Activated CD4-positive, alpha-beta memory T cell treated with anti-CD3 and anti-CD28 coated beads, Interleukin-2, amount 10 ng/mL, durations not matched to agents 7 days and 5 days (primary cell): ENCODE measurements at regions of chr15 and their contacts with region 1.

Region 1: DNA sequence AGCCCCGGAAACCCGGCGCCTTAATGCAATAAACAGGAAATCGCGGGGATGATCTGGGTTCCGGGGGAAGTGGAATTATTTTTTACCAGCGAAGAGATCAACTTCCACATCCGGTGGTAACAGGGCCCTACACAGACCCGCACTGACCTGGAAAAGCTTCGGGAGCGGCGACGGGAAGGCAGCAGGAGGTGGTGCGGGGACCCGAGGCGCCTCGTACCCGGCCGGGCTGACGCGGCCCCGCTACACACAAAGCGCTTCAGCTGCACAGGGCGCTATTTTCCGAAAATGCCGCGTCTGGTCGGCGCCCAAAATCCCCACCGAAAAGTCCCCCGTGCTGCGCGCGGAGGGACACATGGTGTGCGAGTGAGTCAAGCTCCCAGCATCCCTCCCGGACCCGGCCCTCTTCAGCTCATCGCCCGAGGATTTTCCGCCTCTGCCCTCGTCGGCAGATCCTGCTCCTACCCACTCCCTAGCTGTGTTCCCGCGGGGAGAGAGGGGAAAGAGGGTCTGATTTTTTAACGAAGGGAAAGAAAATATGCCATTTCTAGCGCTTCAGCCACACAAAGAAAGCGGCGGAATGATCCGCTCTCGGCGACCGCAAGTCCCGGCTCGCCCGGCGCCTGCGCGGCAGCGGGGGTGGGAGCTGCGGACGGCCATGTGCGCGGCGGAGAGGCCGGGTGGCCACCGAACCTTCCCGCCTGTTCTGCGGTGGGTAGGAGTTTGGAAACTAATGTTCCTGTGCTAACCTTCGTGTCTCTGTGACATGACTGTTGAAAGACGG is at the start of gene GABPB1:
- DNase-seq: peak; percentile 90
- H3K4me3 Mint-ChIP-seq: peak within 1 kb of the TSS; percentile 88
- H3K27ac Mint-ChIP-seq: peak within 1 kb of the TSS; percentile 100
- H3K4me1 Mint-ChIP-seq: peaks cover 42% of the 10 kb centered on the region
- H3K27me3 Mint-ChIP-seq: no peaks in the 10 kb centered on the region
- total RNA-seq, gene GABPB1: 37.5 to 38.1 TPM

Region 2: GRCh38 chr15:48877630-48878595 is 1477.1 kb before region 1 on chr15 and contains the start of gene EID1:
- CTCF ChIA-PET with region 1: interaction called, 3 read pairs
- POLR2A ChIA-PET with region 1: interaction called, 13 read pairs
- DNase-seq: peak; percentile 96
- H3K4me3 Mint-ChIP-seq: peak within 1 kb of the TSS; percentile 99
- H3K27ac Mint-ChIP-seq: peak within 1 kb of the TSS; percentile 97
- H3K4me1 Mint-ChIP-seq: peaks cover 49% of the 10 kb centered on the region
- H3K27me3 Mint-ChIP-seq: no peaks in the 10 kb centered on the region
- total RNA-seq, gene EID1: 99.7 to 102 TPM

Region 3: DNA sequence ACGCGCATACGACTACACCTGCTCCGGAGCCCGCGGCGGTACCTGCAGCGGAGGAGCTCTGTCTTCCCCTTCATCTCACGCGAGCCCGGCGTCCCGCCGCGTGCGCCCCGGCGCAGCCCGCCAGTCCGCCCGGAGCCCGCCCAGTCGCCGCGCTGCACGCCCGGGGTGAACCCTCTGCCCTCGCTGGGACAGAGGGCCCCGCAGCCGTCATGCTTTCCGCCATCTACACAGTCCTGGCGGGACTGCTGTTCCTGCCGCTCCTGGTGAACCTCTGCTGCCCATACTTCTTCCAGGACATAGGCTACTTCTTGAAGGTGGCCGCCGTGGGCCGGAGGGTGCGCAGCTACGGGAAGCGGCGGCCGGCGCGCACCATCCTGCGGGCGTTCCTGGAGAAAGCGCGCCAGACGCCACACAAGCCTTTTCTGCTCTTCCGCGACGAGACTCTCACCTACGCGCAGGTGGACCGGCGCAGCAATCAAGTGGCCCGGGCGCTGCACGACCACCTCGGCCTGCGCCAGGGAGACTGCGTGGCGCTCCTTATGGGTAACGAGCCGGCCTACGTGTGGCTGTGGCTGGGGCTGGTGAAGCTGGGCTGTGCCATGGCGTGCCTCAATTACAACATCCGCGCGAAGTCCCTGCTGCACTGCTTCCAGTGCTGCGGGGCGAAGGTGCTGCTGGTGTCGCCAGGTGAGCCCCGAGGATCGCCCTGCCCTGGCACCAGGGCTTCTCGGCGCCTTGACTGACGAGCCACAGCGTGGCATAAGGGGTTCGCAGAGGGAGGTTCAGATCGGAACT is 172.6 kb before region 1 on chr15:
- CTCF ChIA-PET with region 1: interaction called, 8 read pairs
- POLR2A ChIA-PET with region 1: interaction called, 85 read pairs
- DNase-seq: peak; percentile 65
- H3K4me3 Mint-ChIP-seq: peak overlapping the region; percentile 96
- H3K27ac Mint-ChIP-seq: peak overlapping the region; percentile 85
- H3K4me1 Mint-ChIP-seq: peaks cover 53% of the 10 kb centered on the region
- H3K27me3 Mint-ChIP-seq: no peaks in the 10 kb centered on the region

Region 4: DNA sequence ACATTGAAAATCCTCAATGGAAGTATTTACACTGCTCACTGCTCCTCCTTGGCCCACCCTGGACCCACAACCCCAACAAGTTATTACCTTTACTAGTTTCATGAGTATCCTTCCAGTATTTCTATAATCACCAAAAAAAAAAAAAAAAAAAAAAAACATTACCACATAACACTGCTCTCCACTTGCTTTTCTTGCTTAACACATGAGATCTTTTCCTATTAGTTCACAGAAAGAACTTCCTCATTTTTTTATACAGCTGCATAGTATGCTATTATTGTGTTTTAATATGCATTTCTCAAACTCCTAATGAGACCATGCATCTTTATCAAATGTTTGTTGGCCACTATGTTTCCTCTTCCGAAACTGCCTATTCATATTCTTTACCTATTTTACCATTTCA is 14.6 kb before region 1 on chr15:
- CTCF ChIA-PET with region 1: interaction called, 3 read pairs
- POLR2A ChIA-PET with region 1: interaction called, 24 read pairs
- DNase-seq: no peak
- H3K4me3 Mint-ChIP-seq: no peak overlapping the region
- H3K27ac Mint-ChIP-seq: no peak overlapping the region
- H3K4me1 Mint-ChIP-seq: peaks cover 14% of the 10 kb centered on the region
- H3K27me3 Mint-ChIP-seq: no peaks in the 10 kb centered on the region

Region 5: DNA sequence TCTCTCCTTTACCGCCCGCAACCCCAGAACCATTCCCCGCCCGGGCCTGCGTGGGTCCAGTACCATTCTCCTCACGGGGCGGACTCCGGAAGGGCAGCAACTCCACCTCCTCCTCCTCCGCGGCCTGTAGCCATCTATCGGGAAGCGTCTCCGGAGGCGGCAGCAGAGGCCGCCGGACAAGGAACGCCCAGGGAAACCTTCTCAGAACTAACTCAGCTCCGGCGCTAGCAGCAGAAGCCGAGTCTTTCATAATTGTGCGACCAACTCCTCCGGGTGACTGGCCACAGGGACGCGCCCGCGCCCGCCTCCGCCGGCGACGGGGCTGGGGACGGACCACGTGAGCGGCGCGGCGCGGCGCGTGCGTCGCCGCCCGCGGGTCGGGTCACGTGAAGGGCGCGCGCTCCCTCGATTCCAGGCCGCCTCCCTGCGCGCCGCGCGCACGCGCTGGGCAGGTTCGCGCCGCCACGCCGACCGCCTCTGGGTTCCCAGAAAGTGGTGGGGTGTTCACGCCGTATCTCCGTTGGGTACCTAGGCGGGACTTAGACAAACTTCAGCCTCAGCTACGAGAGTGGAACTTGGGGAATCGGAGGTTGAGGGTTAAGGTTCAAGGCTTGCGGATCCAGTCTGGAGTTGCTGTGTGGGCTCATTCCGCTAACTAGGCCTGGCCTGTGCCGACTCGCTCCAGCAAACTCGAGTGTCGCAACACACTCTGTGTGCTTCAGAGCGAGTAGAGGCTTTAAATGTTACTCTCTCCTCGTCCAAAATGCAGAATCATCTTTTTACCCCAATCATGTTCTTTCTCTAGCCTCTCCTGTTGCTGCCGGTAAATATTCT is 331.7 kb after region 1 on chr15 and contains the start of gene TRPM7:
- CTCF ChIA-PET with region 1: no interaction called
- POLR2A ChIA-PET with region 1: interaction called, 11 read pairs
- DNase-seq: peak; percentile 90
- H3K4me3 Mint-ChIP-seq: peak within 1 kb of the TSS; percentile 99
- H3K27ac Mint-ChIP-seq: peak within 1 kb of the TSS; percentile 97
- H3K4me1 Mint-ChIP-seq: peaks cover 57% of the 10 kb centered on the region
- H3K27me3 Mint-ChIP-seq: no peaks in the 10 kb centered on the region
- total RNA-seq, gene TRPM7: 35.3 to 40.2 TPM

Region 6: DNA sequence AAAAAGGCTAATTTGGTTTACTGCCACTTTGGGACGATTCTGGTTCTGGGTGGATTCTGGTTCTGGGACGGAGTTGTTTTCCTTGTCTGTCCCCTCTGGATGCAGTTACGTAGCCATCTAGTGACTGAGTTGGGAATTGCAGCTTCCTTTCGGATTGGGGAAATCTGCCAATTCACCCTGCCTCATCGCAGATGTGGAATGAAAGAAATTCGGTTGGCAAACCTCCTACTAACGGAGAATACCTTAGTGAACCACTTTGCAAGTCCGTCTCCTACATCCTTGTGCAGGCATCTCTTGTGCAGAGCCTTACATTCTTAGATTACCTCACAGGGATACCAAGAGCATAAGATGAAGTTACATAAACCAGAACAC is 521.9 kb after region 1 on chr15:
- CTCF ChIA-PET with region 1: interaction called, 3 read pairs
- POLR2A ChIA-PET with region 1: interaction called, 26 read pairs
- DNase-seq: peak; percentile 71
- H3K4me3 Mint-ChIP-seq: peak overlapping the region; percentile 58
- H3K27ac Mint-ChIP-seq: peak overlapping the region; percentile 52
- H3K4me1 Mint-ChIP-seq: peaks cover 50% of the 10 kb centered on the region
- H3K27me3 Mint-ChIP-seq: peaks cover 10% of the 10 kb centered on the region

Region 7: DNA sequence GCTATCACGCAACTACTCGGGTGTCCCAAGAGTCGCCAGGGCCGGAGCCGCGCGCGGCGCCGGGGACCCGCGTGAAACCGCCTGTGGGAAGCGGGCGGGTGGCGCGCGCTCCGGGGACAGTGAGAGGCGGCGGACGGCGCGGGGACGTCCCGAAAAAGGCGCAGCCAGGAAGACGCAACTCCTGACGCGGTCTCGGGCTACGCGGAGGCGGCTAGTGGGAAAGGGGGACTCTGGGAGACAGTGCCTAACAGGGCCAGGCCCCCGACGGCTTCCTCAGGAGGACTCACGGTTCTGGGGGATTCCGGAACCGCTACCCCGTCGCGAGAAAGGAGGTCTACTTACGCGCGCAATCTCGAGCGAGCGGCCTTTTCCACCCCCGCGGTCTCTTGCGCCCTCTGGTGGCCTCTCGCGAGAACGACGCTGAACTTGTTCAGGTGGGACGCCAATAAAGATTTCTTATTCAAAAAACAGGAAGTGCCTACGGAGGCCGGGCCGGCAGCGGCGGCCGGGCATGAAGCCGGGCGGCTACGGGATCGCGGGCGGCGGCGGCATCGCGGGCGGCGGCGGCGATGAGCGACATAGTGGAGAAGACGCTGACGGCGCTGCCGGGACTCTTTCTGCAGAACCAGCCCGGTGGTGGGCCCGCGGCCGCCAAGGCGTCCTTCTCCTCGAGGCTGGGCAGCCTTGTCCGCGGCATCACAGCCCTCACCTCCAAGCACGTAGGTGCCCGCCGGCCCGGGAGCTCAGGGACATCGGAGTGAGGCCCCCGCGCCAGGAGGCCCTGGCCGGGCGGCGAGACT is 553.4 kb after region 1 on chr15 and contains the start of gene AP4E1:
- CTCF ChIA-PET with region 1: no interaction called
- POLR2A ChIA-PET with region 1: interaction called, 21 read pairs
- DNase-seq: peak; percentile 95
- H3K4me3 Mint-ChIP-seq: peak within 1 kb of the TSS; percentile 96
- H3K27ac Mint-ChIP-seq: peak within 1 kb of the TSS; percentile 98
- H3K4me1 Mint-ChIP-seq: peaks cover 28% of the 10 kb centered on the region
- H3K27me3 Mint-ChIP-seq: no peaks in the 10 kb centered on the region
- total RNA-seq, gene AP4E1: 13.3 to 14.5 TPM